PC-3 (cell line): ENCODE measurements at regions of chr10 and their contacts with region 1.

Region 1: GRCh38 chr10:14588084-14588937 is 186.4 kb downstream of the FAM107B start:
- DNase-seq: peak; percentile 77
- ATAC-seq: peak; percentile 64
- H3K4me3 ChIP-seq: peak overlapping the region; percentile 37
- H3K27ac ChIP-seq: peak overlapping the region; percentile 98
- H3K4me1 ChIP-seq: peaks cover 70% of the 10 kb centered on the region
- H3K27me3 ChIP-seq: no peaks in the 10 kb centered on the region
- CTCF ChIP-seq: no peak

Region 2: DNA sequence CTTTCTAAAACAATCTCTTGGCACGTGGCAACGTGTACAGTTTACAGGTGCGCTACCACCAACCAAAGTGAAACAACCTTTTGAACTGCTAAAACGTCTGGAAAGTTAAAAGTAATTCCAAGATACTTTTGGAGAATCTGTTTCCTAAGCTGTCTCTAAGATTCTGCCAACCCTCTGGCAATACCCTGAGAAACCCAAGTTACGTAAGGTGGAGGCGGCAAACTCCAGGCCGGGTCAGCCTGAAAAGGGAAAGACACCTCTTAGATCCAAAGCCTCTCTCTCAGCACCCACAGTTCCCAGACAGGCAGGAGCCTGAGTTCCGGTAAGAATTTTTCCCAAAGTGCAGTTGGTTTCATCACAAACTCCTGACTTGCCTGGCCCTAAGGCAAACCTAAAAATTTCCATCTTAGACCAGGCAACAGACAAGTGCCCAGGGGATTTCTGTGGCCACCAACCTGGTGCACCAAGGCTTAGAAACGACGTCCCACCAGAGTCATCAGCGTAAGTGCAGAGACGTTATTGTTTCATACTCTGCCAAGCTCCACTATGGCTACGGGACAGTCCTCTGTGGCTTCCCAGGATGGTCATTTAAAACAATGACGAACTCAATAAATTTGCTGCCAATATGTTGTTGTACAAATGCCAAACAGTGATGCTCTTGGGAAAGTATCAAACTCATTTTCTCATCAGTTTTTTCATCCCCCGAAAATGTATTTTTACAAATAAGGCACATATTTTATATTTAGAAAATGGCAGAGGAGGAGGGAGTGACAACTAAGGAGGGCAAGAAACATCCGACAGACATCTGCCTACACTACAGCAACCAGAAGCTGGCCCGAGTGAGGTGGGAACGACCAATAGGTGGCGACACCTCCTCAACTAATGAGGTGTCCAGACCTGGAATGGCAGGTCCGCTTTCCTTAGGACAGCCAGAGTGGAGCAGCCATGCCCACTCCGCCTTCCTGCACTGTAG is 51.8 kb before region 1 on chr10:
- CTCF ChIA-PET with region 1: no interaction called
- POLR2A ChIA-PET with region 1: no interaction called
- intact Hi-C with region 1: no loop called
- DNase-seq: peak; percentile 70
- ATAC-seq: peak; percentile 66
- H3K4me3 ChIP-seq: no peak overlapping the region
- H3K27ac ChIP-seq: no peak overlapping the region
- H3K4me1 ChIP-seq: peaks cover 27% of the 10 kb centered on the region
- H3K27me3 ChIP-seq: no peaks in the 10 kb centered on the region
- CTCF ChIP-seq: peak; percentile 63

Region 3: GRCh38 chr10:14547816-14548215 is 40.5 kb before region 1 on chr10:
- CTCF ChIA-PET with region 1: no interaction called
- POLR2A ChIA-PET with region 1: no interaction called
- intact Hi-C with region 1: loop called (anchors 5 kb)
- DNase-seq: no peak
- ATAC-seq: no peak
- H3K4me3 ChIP-seq: no peak overlapping the region
- H3K27ac ChIP-seq: no peak overlapping the region
- H3K4me1 ChIP-seq: peaks cover 29% of the 10 kb centered on the region
- H3K27me3 ChIP-seq: no peaks in the 10 kb centered on the region
- CTCF ChIP-seq: peak; percentile 31; the same call in 1 of the 2 replicates

Region 4: DNA sequence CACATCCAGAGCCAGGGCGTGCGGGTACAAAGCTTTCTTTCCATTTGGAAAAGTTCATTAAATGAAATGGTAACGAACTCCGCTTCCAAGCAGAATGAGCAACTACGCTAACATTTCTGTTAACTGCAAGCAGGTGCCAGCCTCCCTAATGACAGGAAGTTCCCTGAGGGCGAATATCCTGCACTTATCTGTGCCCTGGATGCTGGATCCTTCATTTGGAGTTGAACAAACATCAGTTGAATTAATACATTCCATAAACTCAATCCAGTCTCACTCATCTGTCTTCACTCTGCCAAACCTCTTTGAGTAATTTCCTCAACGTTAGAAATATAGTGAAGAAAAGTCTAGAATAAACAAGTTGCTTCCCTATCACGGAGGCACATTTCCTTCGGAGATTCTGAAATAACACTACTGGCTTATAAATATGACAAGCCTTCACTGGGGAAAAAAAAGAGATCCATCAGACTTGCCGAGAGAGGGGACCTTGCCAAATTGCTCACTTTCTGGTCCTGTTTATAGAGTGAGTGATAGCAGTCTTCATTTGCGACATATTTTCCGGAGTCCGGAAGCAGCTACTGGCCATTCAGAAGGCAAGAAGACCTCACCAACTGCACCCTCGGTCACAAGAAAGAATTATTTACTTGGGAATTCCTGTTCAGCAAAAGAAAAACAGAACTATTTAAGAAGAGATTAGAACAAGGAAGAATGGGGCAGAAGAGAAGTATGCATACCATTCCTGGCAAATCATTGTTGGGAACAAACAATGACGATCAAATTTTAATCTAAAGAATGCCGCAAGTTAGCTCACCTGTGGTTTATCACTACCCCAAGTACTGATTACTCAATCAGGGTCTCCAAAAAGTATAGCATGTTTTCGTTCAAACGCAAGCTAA is 10.0 kb before region 1 on chr10:
- CTCF ChIA-PET with region 1: interaction called, 3 read pairs
- POLR2A ChIA-PET with region 1: interaction called, 4 read pairs
- intact Hi-C with region 1: loop called (anchors 1 kb)
- DNase-seq: peak; percentile 83
- ATAC-seq: peak; percentile 68
- H3K4me3 ChIP-seq: peak overlapping the region; percentile 54
- H3K27ac ChIP-seq: peak overlapping the region; percentile 94
- H3K4me1 ChIP-seq: peaks cover 53% of the 10 kb centered on the region
- H3K27me3 ChIP-seq: no peaks in the 10 kb centered on the region
- CTCF ChIP-seq: no peak

Region 5: DNA sequence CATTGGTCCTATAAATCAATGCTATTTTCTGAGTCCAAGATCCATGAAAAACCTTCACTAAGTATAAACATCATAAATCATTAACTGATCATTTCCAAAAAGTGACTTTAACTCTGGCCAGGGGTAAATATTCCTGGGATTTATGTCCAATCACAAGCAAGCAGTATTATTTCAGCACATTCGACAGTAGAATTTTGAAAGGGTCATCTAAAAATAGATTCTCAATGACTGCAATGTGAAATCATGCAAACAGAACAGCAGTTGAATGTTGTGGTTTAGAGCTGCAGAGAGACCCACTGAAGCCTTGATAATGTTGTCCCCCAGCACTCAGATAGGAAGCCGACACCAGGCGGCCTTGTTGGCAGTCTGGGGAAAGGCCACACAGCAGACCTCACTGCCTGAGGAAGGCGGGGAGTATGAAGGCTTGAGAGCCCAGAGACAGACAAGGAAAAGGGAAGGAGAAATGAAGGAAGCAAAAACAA is 148.3 kb after region 1 on chr10:
- CTCF ChIA-PET with region 1: no interaction called
- POLR2A ChIA-PET with region 1: no interaction called
- intact Hi-C with region 1: no loop called
- DNase-seq: no peak
- ATAC-seq: no peak
- H3K4me3 ChIP-seq: no peak overlapping the region
- H3K27ac ChIP-seq: no peak overlapping the region
- H3K4me1 ChIP-seq: no peaks in the 10 kb centered on the region
- H3K27me3 ChIP-seq: no peaks in the 10 kb centered on the region
- CTCF ChIP-seq: no peak